GM10248 (cell line): ENCODE measurements at regions of chr6 and their contacts with region 1.

Region 1: GRCh38 chr6:85482905-85483700 is 33.2 kb downstream of the NT5E start:
- DNase-seq: peak; percentile 70
- CTCF ChIP-seq: peak; percentile 99

Region 2: DNA sequence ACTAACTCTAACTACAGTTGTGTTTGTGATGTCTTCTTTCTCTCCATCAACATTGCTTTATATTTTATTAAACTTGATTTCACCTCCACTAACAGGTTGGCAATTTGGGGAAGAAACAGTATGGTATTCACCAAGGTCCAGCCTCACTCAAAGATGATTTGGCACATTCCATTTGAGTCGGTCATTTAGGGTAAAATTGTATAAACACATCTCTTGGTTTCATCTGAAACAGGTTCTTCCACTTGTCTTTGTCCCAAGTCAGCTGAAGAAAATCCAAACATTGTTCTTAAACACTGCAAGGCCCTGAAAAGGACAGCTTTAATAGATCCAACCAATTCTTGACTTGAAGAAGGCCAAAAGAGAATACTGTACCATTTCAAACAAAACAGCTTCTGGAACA is 138.1 kb before region 1 on chr6:
- CTCF ChIA-PET with region 1: interaction called, 13 read pairs
- POLR2A ChIA-PET with region 1: no interaction called
- DNase-seq: no peak
- CTCF ChIP-seq: no peak

Region 3: GRCh38 chr6:85360794-85361642 is 122.1 kb before region 1 on chr6:
- CTCF ChIA-PET with region 1: interaction called, 186 read pairs
- POLR2A ChIA-PET with region 1: no interaction called
- DNase-seq: no peak
- CTCF ChIP-seq: no peak

Region 4: GRCh38 chr6:85421997-85422401 is 61.1 kb before region 1 on chr6:
- CTCF ChIA-PET with region 1: interaction called, 10 read pairs
- POLR2A ChIA-PET with region 1: no interaction called
- DNase-seq: no peak
- CTCF ChIP-seq: no peak

Region 5: GRCh38 chr6:85449818-85450759 is 33.0 kb before region 1 on chr6 and contains the start of gene NT5E:
- CTCF ChIA-PET with region 1: interaction called, 70 read pairs
- POLR2A ChIA-PET with region 1: no interaction called
- DNase-seq: peak; percentile 87
- CTCF ChIP-seq: peak; percentile 30

Region 6: GRCh38 chr6:85468261-85468660 is 14.8 kb before region 1 on chr6:
- CTCF ChIA-PET with region 1: interaction called, 74 read pairs
- POLR2A ChIA-PET with region 1: no interaction called
- DNase-seq: no peak
- CTCF ChIP-seq: no peak

Region 7: DNA sequence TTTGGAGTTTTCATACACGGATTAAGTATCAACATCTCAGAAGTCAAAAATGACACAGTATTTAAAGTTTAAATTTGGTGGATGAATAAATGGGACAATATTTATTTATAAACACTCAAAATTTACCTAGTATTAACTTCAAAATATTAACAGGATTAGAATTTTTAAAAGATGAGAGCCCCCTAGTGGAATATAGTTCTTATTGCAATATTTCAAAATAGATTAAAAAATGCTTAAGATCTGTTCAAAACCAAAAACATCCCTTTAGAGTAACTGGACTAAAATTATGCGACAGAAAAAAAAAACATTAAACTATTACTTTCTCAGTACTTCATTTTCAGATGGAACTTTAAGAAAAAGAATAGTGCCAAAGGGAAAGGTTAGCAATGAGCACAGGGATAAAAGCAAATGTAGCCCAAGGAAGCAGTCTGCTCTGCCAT is 54.0 kb after region 1 on chr6:
- CTCF ChIA-PET with region 1: interaction called, 22 read pairs
- POLR2A ChIA-PET with region 1: no interaction called
- DNase-seq: peak; percentile 15
- CTCF ChIP-seq: peak; percentile 35